SK-N-SH (cell line): ENCODE measurements at regions of chr3 and their contacts with region 1.

Region 1: GRCh38 chr3:57169872-57170623 is 4.9 kb upstream of the IL17RD start:
- DNase-seq: peak; percentile 84
- H3K4me3 ChIP-seq: peak overlapping the region; percentile 30 to 34
- H3K27ac ChIP-seq: no peak overlapping the region
- H3K4me1 ChIP-seq: peaks cover 0 to 15% of the 10 kb centered on the region in 2 experiments; a peak in 1 of 4 replicates
- H3K27me3 ChIP-seq: peaks cover 15% of the 10 kb centered on the region; the same call in 1 of the 2 replicates
- CTCF ChIP-seq: peak; percentile 79
- EP300 ChIP-seq: no peak
- RAD21 ChIP-seq: peak; percentile 81

Region 2: DNA sequence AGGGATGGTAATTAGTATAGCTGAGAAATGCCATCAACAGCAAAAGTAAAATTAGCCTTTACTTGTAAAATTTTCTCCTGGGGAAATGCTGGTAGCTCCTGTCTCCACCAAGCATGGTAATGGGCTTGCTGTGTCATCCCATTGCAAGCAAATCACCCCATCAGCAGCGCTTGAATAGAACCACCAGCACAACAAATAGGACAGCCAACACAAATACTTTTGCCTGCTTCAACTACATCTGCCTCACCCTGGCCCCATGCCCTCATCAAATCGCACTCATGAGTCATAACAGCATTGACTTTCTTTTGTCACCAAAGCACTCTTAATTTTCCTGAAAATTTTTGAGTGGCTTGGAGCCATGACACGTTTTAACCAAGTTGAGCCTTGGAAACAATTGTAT is 754.4 kb before region 1 on chr3:
- CTCF ChIA-PET with region 1: no interaction called
- POLR2A ChIA-PET with region 1: no interaction called
- DNase-seq: no peak
- H3K4me3 ChIP-seq: no peak overlapping the region
- H3K27ac ChIP-seq: no peak overlapping the region
- H3K4me1 ChIP-seq: no peaks in the 10 kb centered on the region
- H3K27me3 ChIP-seq: no peaks in the 10 kb centered on the region
- CTCF ChIP-seq: no peak
- EP300 ChIP-seq: no peak
- RAD21 ChIP-seq: no peak

Region 3: GRCh38 chr3:57105585-57105984 is 64.5 kb before region 1 on chr3:
- CTCF ChIA-PET with region 1: interaction called, 52 read pairs
- POLR2A ChIA-PET with region 1: no interaction called
- DNase-seq: no peak
- H3K4me3 ChIP-seq: no peak overlapping the region; a peak in 1 of 4 replicates
- H3K27ac ChIP-seq: peak overlapping the region in 1 of 2 experiments; percentile 29; a peak in 1 of 4 replicates
- H3K4me1 ChIP-seq: peaks cover 0 to 7% of the 10 kb centered on the region in 2 experiments; a peak in 1 of 4 replicates
- H3K27me3 ChIP-seq: no peaks in the 10 kb centered on the region
- CTCF ChIP-seq: no peak
- EP300 ChIP-seq: no peak
- RAD21 ChIP-seq: no peak

Region 4: GRCh38 chr3:57130571-57131209 is 39.4 kb before region 1 on chr3:
- CTCF ChIA-PET with region 1: interaction called, 11 read pairs
- POLR2A ChIA-PET with region 1: interaction called, 4 read pairs
- DNase-seq: peak; percentile 81
- H3K4me3 ChIP-seq: no peak overlapping the region; a peak in 1 of 4 replicates
- H3K27ac ChIP-seq: peak overlapping the region in 1 of 2 experiments; percentile 100; a peak in 2 of 4 replicates
- H3K4me1 ChIP-seq: peaks cover 8 to 75% of the 10 kb centered on the region in 2 experiments; a peak in 3 of 4 replicates
- H3K27me3 ChIP-seq: no peaks in the 10 kb centered on the region
- CTCF ChIP-seq: no peak
- EP300 ChIP-seq: peak; percentile 9 to 98; a peak in 2 of 4 replicates
- RAD21 ChIP-seq: peak; percentile 30; the same call in 1 of the 2 replicates

Region 5: DNA sequence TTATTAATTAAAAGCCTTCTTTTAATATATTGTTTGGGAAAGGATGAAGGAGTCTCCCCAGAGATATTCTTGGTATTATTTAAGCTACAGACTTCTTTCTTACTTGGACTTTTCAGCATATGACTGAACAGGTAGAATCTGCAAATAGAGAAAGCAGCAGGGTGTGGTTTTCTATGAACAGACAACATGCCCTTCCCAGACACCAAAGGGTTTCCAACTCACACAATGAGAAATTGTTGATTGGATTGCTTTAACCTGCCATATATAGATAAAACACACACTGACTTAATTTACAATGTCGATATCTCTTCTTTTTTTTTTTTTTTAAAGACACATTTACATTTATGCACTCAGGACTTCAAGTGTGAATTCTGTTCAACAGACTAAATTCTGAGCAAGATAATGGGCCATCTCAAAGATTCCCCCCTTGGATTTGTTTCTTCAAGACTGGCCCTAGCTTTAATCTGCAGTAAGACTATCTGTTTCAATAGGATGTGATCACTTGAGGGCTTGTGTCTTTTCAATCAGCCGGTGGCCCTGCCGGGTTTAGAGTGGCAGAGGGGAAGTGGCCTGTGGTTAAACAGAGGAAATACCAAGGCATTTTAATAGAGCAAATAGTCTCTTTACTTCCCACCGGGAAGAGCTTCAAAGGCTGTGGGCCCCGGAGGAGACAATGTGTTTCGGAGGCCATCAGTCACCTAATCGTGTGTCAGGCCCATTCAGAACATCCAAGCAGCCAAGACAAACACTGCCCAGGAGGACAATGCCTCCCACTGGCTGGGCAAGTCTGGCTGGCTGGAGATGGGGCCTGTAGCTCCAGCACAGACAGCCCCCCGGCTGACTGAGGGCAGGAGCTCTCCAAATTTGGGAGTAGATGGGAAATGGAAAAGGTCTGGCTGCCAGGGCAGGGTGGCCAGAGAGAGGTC is 11.0 kb before region 1 on chr3:
- CTCF ChIA-PET with region 1: interaction called, 19 read pairs
- POLR2A ChIA-PET with region 1: no interaction called
- DNase-seq: no peak
- H3K4me3 ChIP-seq: no peak overlapping the region
- H3K27ac ChIP-seq: peak overlapping the region in 1 of 2 experiments; percentile 78; a peak in 2 of 4 replicates
- H3K4me1 ChIP-seq: peaks cover 7 to 89% of the 10 kb centered on the region in 2 experiments; a peak in 2 of 4 replicates
- H3K27me3 ChIP-seq: no peaks in the 10 kb centered on the region
- CTCF ChIP-seq: no peak
- EP300 ChIP-seq: no peak
- RAD21 ChIP-seq: no peak

Region 6: GRCh38 chr3:57221883-57222282 is 51.8 kb after region 1 on chr3:
- CTCF ChIA-PET with region 1: interaction called, 15 read pairs
- POLR2A ChIA-PET with region 1: no interaction called
- DNase-seq: peak; percentile 36
- H3K4me3 ChIP-seq: no peak overlapping the region
- H3K27ac ChIP-seq: no peak overlapping the region
- H3K4me1 ChIP-seq: peaks cover 0 to 3% of the 10 kb centered on the region in 2 experiments; a peak in 2 of 4 replicates
- H3K27me3 ChIP-seq: no peaks in the 10 kb centered on the region
- CTCF ChIP-seq: peak; percentile 53
- EP300 ChIP-seq: no peak
- RAD21 ChIP-seq: peak; percentile 80

Region 7: DNA sequence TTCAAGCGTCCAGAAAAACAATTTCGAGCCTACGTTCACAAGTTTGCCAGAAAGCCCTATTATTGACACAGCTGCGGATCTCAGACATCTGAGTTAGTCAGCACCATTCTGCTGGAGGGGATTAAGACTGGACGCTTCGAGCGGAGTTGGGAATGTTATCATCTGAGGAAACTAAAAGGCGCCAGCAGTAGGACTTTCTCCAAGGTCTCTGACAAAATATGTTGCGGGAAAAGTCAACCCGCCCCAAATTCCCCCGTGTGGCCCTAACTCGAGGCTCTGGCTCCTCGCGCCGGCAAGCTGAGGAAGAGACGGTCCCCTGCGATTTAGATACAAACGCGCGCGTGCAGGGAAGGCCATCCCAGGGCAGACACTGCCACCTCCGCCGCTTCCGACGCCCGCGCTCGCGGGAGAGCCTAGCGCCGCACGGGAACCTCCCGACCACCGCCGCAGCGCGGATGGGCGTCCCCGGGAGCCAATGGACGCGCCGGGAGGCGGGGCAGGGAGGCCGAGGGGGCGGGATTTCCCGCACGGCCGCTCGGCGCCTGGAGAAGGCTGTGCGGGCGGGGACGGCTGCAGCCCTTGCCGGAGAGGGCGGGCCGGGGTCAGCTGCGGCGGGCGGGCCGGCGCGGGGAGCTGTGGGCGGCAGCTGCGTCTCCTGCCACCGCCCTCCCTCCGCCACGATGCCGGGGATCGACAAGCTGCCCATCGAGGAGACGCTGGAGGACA is 57.3 kb after region 1 on chr3 and contains the start of gene APPL1:
- CTCF ChIA-PET with region 1: interaction called, 15 read pairs
- POLR2A ChIA-PET with region 1: no interaction called
- DNase-seq: peak; percentile 100
- H3K4me3 ChIP-seq: peak within 1 kb of the TSS; percentile 82 to 83
- H3K27ac ChIP-seq: peak within 1 kb of the TSS; percentile 74 to 92
- H3K4me1 ChIP-seq: peaks cover 0 to 12% of the 10 kb centered on the region in 2 experiments; a peak in 2 of 4 replicates
- H3K27me3 ChIP-seq: no peaks in the 10 kb centered on the region
- CTCF ChIP-seq: no peak
- EP300 ChIP-seq: no peak
- RAD21 ChIP-seq: no peak
- polyA plus RNA-seq, gene APPL1: 6.9 and 9.9 TPM in 2 replicates

Region 8: DNA sequence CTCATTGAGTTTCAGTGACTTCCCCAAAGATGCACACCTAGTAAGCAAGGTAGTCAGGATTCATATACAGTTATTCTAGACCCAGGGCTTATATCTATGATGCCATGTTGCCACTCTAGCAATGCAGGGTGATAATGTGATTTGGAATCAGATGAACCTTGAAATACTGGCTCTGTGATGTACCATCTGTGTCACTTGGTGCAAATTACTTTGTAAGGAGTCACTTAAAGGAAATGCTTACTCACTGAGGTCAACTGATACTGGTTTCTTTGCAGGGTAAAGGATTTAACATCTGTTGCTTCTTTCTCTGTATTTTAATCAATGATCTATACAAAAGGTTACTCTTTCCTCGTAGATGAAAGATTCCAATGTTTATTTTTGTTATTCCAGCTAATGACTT is 111.7 kb after region 1 on chr3:
- CTCF ChIA-PET with region 1: no interaction called
- POLR2A ChIA-PET with region 1: no interaction called
- DNase-seq: no peak
- H3K4me3 ChIP-seq: no peak overlapping the region
- H3K27ac ChIP-seq: no peak overlapping the region
- H3K4me1 ChIP-seq: no peaks in the 10 kb centered on the region; a peak in 1 of 4 replicates
- H3K27me3 ChIP-seq: no peaks in the 10 kb centered on the region
- CTCF ChIP-seq: no peak
- EP300 ChIP-seq: no peak
- RAD21 ChIP-seq: no peak